Gastrocnemius medialis (tissue), 4 donors: ENCODE measurements at regions of chr5 and their contacts with region 1.

Region 1: GRCh38 chr5:112329419-112330090 is 89.5 kb downstream of the EPB41L4A start:
- DNase-seq: no peak
- ATAC-seq: no peak
- H3K4me3 ChIP-seq: no peak overlapping the region
- H3K27ac ChIP-seq: peak overlapping the region in 1 of 4 donors; percentile 14
- H3K4me1 ChIP-seq: no peaks in the 10 kb centered on the region
- H3K27me3 ChIP-seq: no peaks in the 10 kb centered on the region
- CTCF ChIP-seq: no peak
- POLR2A ChIP-seq: no peak

Region 2: GRCh38 chr5:112294126-112294525 is 35.4 kb before region 1 on chr5:
- in situ Hi-C with region 1: no loop called
- intact Hi-C with region 1: no loop called
- DNase-seq: no peak
- ATAC-seq: no peak
- H3K4me3 ChIP-seq: no peak overlapping the region
- H3K27ac ChIP-seq: no peak overlapping the region
- H3K4me1 ChIP-seq: peaks cover 0 to 3% of the 10 kb centered on the region in 2 donors
- H3K27me3 ChIP-seq: no peaks in the 10 kb centered on the region
- CTCF ChIP-seq: no peak
- POLR2A ChIP-seq: no peak

Region 3: GRCh38 chr5:112372539-112372938 is 43.0 kb after region 1 on chr5:
- in situ Hi-C with region 1: no loop called
- intact Hi-C with region 1: loop called (anchors 5 kb)
- DNase-seq: no peak
- ATAC-seq: no peak
- H3K4me3 ChIP-seq: no peak overlapping the region
- H3K27ac ChIP-seq: no peak overlapping the region
- H3K4me1 ChIP-seq: peaks cover 0 to 5% of the 10 kb centered on the region in 2 donors
- H3K27me3 ChIP-seq: no peaks in the 10 kb centered on the region
- CTCF ChIP-seq: no peak
- POLR2A ChIP-seq: no peak

Region 4: DNA sequence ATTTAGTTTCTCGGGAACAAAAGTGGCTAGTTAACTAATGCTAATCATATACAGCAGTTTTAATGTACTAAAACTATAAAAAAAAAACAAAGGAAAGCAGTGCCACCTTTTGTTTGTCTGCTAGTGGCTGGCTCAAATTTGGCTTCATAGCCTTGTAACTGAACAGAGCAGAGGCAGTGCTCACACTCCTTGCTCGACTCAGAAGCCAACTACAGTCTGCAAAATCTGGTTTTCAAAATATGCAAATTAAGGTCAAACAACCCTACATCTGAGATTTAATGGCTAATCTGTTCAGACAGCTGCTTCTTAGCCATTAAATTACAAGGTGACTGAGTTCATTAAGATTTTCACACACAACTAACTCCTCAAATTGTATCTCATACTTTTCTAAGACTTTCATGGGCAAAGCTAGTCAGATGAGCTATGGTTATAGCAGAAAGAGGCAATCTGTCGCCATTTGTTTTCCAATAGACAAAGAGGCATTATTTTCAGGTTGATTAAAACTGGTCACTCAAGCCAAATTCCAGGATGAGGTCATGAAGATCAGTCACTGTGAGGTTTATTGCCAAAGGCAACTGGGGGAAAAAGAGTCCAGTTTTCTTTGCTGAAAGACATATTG is 146.3 kb after region 1 on chr5:
- in situ Hi-C with region 1: no loop called
- intact Hi-C with region 1: no loop called
- DNase-seq: no peak
- ATAC-seq: no peak
- H3K4me3 ChIP-seq: no peak overlapping the region
- H3K27ac ChIP-seq: no peak overlapping the region
- H3K4me1 ChIP-seq: no peaks in the 10 kb centered on the region
- H3K27me3 ChIP-seq: no peaks in the 10 kb centered on the region
- CTCF ChIP-seq: no peak
- POLR2A ChIP-seq: no peak